ENCODE measurements at regions of chr17 and their contacts with region 1.

Region 1: GRCh38 chr17:78250891-78251794 is 19.7 kb downstream of the TMEM235 start:
- DNase-seq: peak; percentile 81
- H3K4me3 ChIP-seq: peak overlapping the region in 2 of 3 experiments; percentile 27 to 38
- H3K27ac ChIP-seq: no peak overlapping the region
- H3K4me1 ChIP-seq: peaks cover 10% of the 10 kb centered on the region
- H3K27me3 ChIP-seq: no peaks in the 10 kb centered on the region
- CTCF ChIP-seq: peak; percentile 96 to 99

Region 2: GRCh38 chr17:78019367-78019975 is 231.7 kb before region 1 on chr17:
- CTCF ChIA-PET with region 1: interaction called, 3 read pairs
- dilution Hi-C with region 1: no loop called
- in situ Hi-C with region 1: no loop called
- intact Hi-C with region 1: loop called (anchors 1 kb)
- DNase-seq: no peak
- H3K4me3 ChIP-seq: no peak overlapping the region
- H3K27ac ChIP-seq: no peak overlapping the region
- H3K4me1 ChIP-seq: no peaks in the 10 kb centered on the region
- H3K27me3 ChIP-seq: no peaks in the 10 kb centered on the region
- CTCF ChIP-seq: peak; percentile 50 to 66

Region 3: GRCh38 chr17:78082988-78083387 is 168.2 kb before region 1 on chr17:
- CTCF ChIA-PET with region 1: interaction called, 14 read pairs
- dilution Hi-C with region 1: no loop called
- in situ Hi-C with region 1: no loop called
- intact Hi-C with region 1: loop called (anchors 1 kb)
- DNase-seq: no peak
- H3K4me3 ChIP-seq: no peak overlapping the region
- H3K27ac ChIP-seq: no peak overlapping the region
- H3K4me1 ChIP-seq: no peaks in the 10 kb centered on the region
- H3K27me3 ChIP-seq: no peaks in the 10 kb centered on the region
- CTCF ChIP-seq: no peak

Region 4: DNA sequence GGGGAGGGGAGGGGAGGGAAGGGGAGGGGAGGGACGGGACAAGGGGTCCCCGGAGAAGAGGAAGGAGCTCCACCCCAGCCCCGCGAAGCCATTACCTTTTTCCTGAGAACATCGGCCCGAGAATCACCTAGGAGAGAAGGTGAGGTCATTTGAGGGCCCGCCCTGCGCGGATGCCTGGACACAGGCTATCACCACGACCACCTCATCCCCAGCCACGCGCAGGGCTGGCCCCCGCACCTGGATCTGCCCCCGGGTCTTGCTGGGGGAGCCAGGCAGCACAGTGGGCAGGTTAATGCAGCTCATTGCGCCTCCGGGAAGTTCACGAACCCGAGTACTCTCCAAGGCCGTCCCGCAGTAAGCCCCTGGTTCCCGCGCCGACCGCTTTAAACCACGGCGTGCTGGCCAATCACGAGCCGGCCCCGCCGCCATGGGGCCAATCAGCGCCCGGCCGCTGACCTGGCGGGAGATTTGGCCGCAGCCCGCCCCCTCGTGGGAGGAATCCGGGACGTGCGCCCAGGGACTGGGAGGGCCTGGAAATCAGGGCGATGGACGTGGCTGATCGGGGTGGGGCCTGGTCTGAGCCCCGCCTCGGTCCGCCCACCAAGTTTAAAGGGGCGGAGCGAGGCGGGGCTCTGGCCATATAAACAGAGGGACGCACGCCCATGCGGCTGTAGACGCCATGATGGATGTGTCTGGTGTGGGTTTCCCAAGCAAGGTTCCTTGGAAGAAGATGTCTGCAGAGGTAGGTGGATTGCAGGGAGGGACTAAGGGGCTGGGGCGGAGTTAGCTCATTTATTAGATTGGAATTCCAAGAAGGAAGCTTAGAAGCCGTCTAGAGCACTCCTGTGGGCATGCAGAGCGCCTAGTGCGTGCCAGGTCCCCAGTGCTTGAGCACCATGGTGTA is 64.2 kb before region 1 on chr17 and contains the starts of genes AFMID and TK1:
- CTCF ChIA-PET with region 1: no interaction called
- dilution Hi-C with region 1: no loop called
- in situ Hi-C with region 1: no loop called
- intact Hi-C with region 1: loop called (anchors 1 kb)
- DNase-seq: peak; percentile 97
- H3K4me3 ChIP-seq: peak within 1 kb of the TSS; percentile 66 to 75 (median 71)
- H3K27ac ChIP-seq: peak within 1 kb of the TSS; percentile 57
- H3K4me1 ChIP-seq: peaks cover 13% of the 10 kb centered on the region
- H3K27me3 ChIP-seq: no peaks in the 10 kb centered on the region
- CTCF ChIP-seq: peak; percentile 43 to 86
- total RNA-seq, gene AFMID: 16.5 to 32.5 TPM
- total RNA-seq, gene TK1: 7.7 to 79.5 TPM

Region 5: DNA sequence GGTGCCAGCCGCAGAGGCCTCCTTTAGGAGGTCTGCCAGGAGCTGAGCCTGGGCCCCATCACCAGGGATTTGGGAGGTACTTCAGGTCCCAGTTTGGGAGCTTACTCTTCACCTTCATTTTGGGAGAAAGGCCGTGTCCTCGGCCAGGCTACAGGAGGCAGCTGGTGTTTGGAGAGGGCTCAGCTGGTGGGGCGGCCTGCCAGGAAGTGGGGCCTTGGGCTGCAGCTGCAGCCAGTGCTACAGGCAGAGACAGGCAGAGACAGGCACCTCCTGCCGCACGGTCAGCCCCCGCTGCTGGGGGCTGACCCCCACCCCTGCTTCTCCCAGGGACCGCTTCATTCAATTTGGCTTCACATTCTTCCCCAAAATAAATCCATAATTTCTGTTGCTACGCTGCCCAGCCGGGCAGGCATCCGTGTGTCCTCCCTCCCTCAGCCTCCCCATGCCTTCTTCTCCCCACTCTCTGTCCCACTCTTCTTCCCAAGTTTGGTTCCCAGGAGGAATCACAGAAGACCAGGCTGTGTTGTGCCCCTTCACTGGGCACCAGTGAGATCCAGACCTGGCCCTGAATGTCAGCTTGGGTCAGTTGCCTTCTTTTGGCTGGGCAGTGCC is 13.6 kb before region 1 on chr17:
- CTCF ChIA-PET with region 1: no interaction called
- dilution Hi-C with region 1: no loop called
- in situ Hi-C with region 1: no loop called
- intact Hi-C with region 1: no loop called
- DNase-seq: no peak
- H3K4me3 ChIP-seq: no peak overlapping the region
- H3K27ac ChIP-seq: no peak overlapping the region
- H3K4me1 ChIP-seq: no peaks in the 10 kb centered on the region
- H3K27me3 ChIP-seq: no peaks in the 10 kb centered on the region
- CTCF ChIP-seq: no peak

Region 6: GRCh38 chr17:78697554-78698343 is 446.6 kb after region 1 on chr17:
- CTCF ChIA-PET with region 1: interaction called, 33 read pairs
- dilution Hi-C with region 1: no loop called
- in situ Hi-C with region 1: no loop called
- intact Hi-C with region 1: no loop called
- DNase-seq: no peak
- H3K4me3 ChIP-seq: no peak overlapping the region
- H3K27ac ChIP-seq: no peak overlapping the region
- H3K4me1 ChIP-seq: no peaks in the 10 kb centered on the region
- H3K27me3 ChIP-seq: no peaks in the 10 kb centered on the region
- CTCF ChIP-seq: no peak

Measured in mammary epithelial cell (primary cell).